HepG2 (cell line): ENCODE measurements at regions of chr3 and their contacts with region 1.

Region 1: DNA sequence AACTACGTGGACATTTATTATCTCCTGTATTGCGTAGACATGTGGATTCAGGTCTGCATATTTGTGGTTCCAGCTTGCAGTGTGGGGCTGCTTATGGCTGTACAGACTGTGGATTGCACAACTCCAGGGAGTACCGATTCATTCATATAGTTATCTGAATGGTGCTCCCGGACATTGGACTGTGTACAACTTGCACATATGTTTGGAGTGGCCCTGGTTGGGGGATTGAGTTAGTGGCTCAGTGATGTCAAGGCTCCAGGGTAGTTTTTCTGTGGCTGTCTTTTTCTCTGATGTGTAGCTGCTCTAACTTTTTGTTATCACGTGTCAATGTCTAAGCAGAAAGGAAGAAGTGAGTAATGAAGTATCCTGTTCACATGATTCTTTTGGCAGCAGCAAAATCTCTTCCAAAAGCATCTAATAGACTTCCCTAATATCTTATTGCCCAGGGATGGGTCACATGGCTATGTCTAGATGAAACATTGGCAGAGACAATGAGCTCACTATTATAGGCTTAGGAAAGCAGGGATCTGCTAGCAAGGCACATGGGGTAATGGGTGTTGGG is 15.8 kb downstream of the ST3GAL6 start:
- DNase-seq: peak; percentile 97
- ATAC-seq: peak; percentile 89
- H3K4me3 ChIP-seq: no peak overlapping the region
- H3K27ac ChIP-seq: peak overlapping the region; percentile 83
- H3K4me1 ChIP-seq: peaks cover 91% of the 10 kb centered on the region
- H3K27me3 ChIP-seq: no peaks in the 10 kb centered on the region
- CTCF ChIP-seq: no peak
- EP300 ChIP-seq: peak; percentile 72 to 87; a peak in 3 of 4 replicates
- POLR2A ChIP-seq: no peak
- RAD21 ChIP-seq: no peak

Region 2: DNA sequence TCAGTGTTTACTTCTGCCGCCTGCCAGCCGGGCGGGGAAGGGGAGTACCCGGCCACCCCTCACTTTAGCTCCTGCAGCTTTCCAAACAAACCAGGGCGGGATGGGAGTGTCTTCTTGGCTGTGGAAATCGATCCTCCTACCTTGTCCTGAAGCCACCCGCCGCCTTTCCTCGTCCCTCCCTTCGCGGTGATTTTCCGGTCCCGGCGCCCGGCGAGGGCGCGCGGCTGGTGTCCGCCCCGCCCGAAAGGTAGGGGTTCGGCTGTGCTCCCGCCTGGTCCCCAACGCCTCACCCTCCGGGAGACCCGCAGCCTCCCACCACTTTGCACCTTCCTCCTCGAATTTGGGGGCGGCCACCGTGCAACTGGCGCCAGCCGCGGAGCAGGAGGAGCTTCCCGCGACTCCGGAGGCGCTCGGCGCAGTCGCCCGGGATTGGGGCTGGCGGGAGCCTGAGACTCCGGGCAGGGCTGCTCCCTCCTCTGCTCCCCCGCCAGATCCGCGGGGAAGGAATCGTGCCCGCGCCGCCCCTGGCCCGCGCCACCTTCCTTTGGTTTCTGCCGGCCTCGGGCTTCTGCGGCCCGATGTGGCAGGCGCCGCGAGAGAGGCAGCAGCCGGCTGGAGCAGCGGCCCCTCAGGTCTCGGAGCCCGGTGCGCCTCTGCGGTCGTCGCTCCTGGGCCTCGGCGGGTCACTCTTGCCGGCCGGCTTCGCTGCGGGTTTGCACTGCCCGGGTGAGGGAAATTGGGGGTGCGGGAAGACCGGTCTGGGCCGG is 46.5 kb before region 1 on chr3:
- CTCF ChIA-PET with region 1: no interaction called
- POLR2A ChIA-PET with region 1: interaction called, 17 read pairs
- in situ Hi-C with region 1: loop called (anchors 5 kb)
- intact Hi-C with region 1: loop called (anchors 1 kb)
- DNase-seq: peak; percentile 82
- ATAC-seq: peak; percentile 85
- H3K4me3 ChIP-seq: peak overlapping the region; percentile 87 to 94 (median 92)
- H3K27ac ChIP-seq: peak overlapping the region; percentile 94
- H3K4me1 ChIP-seq: peaks cover 53% of the 10 kb centered on the region
- H3K27me3 ChIP-seq: no peaks in the 10 kb centered on the region; a peak in 1 of 5 replicates
- CTCF ChIP-seq: 0 out of 2 replicates have a peak, but pooled peaks have one; percentile 16
- EP300 ChIP-seq: peak in 1 of 2 experiments; percentile 31; a peak in 1 of 4 replicates
- POLR2A ChIP-seq: peak; percentile 62 to 70; a peak in 3 of 4 replicates
- RAD21 ChIP-seq: no peak

Region 3: DNA sequence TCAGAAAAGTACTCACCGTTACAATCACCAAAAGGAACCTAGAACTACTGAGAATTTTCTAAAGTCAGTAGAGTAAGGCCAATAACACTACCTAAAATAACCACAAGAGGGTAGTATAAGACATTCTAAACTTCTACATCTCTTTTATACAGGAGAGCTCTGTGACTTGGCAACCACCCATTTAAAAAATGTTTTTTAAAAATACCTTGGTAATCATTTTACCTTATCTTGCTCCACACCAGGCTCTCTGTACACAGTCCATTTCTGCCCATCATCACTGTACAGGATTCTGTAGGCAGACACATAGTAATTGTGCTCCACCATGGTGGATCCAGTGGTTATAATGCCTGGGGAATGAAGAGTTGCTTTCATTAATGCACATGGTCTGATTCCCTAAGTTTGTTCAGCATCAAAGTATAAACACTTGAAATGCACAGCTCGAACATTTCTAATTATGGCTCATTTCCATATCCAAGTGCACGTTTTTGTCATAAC is 38.7 kb after region 1 on chr3:
- CTCF ChIA-PET with region 1: no interaction called
- POLR2A ChIA-PET with region 1: no interaction called
- in situ Hi-C with region 1: no loop called
- intact Hi-C with region 1: no loop called
- DNase-seq: peak; percentile 31
- ATAC-seq: peak; percentile 70
- H3K4me3 ChIP-seq: no peak overlapping the region
- H3K27ac ChIP-seq: no peak overlapping the region
- H3K4me1 ChIP-seq: peaks cover 8% of the 10 kb centered on the region
- H3K27me3 ChIP-seq: no peaks in the 10 kb centered on the region; a peak in 1 of 5 replicates
- CTCF ChIP-seq: peak; percentile 59
- EP300 ChIP-seq: no peak
- POLR2A ChIP-seq: no peak
- RAD21 ChIP-seq: peak; percentile 48; the same call in 1 of the 2 replicates

Region 4: GRCh38 chr3:98846101-98846500 is 67.2 kb after region 1 on chr3:
- CTCF ChIA-PET with region 1: no interaction called
- POLR2A ChIA-PET with region 1: no interaction called
- in situ Hi-C with region 1: no loop called
- intact Hi-C with region 1: no loop called
- DNase-seq: no peak
- ATAC-seq: no peak
- H3K4me3 ChIP-seq: no peak overlapping the region
- H3K27ac ChIP-seq: no peak overlapping the region
- H3K4me1 ChIP-seq: no peaks in the 10 kb centered on the region
- H3K27me3 ChIP-seq: no peaks in the 10 kb centered on the region
- CTCF ChIP-seq: no peak
- EP300 ChIP-seq: no peak
- POLR2A ChIP-seq: no peak
- RAD21 ChIP-seq: no peak